Mammary epithelial cell (primary cell): ENCODE measurements at regions of chr1 and their contacts with region 1.

Region 1: DNA sequence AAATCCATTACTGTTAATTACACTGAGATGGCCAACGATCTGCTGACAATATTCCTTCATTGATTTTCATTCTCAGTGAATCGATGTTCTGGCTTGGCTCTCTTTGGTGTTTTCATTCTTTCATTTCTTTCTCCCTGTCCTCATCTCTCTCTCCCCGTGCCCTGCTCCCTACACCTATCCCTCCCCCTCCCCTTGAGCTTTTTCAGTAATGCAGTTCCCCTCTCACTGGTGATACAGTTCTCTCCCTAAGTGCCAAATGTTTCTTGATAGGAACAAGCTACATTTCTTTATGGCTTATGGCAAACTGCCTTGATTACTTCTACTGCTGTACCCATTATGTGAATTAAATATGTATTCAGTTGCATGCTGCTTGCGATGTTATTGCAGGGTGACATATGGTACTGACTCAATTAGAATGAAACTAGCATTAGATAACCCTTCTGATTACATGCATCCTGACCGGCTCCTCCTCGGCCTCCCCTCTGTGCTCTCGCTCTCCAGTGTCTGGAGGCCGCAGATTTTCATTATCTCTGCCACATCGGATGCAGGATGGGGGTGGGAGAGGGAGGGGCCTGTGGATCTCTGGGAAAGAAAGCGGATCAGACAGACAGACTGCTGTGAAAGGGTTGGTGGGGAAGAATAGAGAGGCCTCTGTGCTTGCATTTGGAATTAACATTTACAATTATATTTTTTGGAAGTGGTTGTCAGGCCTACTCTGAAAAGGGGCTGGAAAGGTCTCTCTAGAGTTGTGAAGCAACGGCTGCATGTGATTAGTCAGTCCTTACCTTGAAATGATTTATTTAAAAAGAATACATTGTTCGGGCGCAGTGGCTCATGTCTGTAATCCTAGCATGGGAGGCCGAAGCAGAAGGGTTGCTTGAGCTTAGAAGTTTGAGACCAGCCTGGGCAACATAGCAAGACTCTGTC is 131.0 kb downstream of the PBX1 start:
- DNase-seq: no peak
- H3K4me3 ChIP-seq: no peak overlapping the region
- H3K27ac ChIP-seq: no peak overlapping the region
- H3K4me1 ChIP-seq: no peaks in the 10 kb centered on the region
- H3K27me3 ChIP-seq: no peaks in the 10 kb centered on the region
- CTCF ChIP-seq: no peak

Region 2: GRCh38 chr1:164452549-164452948 is 237.4 kb before region 1 on chr1:
- CTCF ChIA-PET with region 1: no interaction called
- dilution Hi-C with region 1: no loop called
- in situ Hi-C with region 1: no loop called
- intact Hi-C with region 1: no loop called
- DNase-seq: no peak
- H3K4me3 ChIP-seq: no peak overlapping the region
- H3K27ac ChIP-seq: no peak overlapping the region
- H3K4me1 ChIP-seq: no peaks in the 10 kb centered on the region
- H3K27me3 ChIP-seq: no peaks in the 10 kb centered on the region
- CTCF ChIP-seq: no peak

Region 3: GRCh38 chr1:164575356-164575886 is 114.5 kb before region 1 on chr1:
- CTCF ChIA-PET with region 1: no interaction called
- dilution Hi-C with region 1: no loop called
- in situ Hi-C with region 1: no loop called
- intact Hi-C with region 1: no loop called
- DNase-seq: no peak
- H3K4me3 ChIP-seq: no peak overlapping the region
- H3K27ac ChIP-seq: no peak overlapping the region
- H3K4me1 ChIP-seq: peaks cover 7% of the 10 kb centered on the region
- H3K27me3 ChIP-seq: no peaks in the 10 kb centered on the region
- CTCF ChIP-seq: no peak

Region 4: GRCh38 chr1:164659621-164660411 is 30.1 kb before region 1 on chr1:
- CTCF ChIA-PET with region 1: no interaction called
- dilution Hi-C with region 1: loop called (anchors 5 kb)
- in situ Hi-C with region 1: no loop called
- intact Hi-C with region 1: no loop called
- DNase-seq: peak; percentile 56
- H3K4me3 ChIP-seq: no peak overlapping the region
- H3K27ac ChIP-seq: no peak overlapping the region
- H3K4me1 ChIP-seq: peaks cover 17% of the 10 kb centered on the region
- H3K27me3 ChIP-seq: no peaks in the 10 kb centered on the region
- CTCF ChIP-seq: no peak

Region 5: DNA sequence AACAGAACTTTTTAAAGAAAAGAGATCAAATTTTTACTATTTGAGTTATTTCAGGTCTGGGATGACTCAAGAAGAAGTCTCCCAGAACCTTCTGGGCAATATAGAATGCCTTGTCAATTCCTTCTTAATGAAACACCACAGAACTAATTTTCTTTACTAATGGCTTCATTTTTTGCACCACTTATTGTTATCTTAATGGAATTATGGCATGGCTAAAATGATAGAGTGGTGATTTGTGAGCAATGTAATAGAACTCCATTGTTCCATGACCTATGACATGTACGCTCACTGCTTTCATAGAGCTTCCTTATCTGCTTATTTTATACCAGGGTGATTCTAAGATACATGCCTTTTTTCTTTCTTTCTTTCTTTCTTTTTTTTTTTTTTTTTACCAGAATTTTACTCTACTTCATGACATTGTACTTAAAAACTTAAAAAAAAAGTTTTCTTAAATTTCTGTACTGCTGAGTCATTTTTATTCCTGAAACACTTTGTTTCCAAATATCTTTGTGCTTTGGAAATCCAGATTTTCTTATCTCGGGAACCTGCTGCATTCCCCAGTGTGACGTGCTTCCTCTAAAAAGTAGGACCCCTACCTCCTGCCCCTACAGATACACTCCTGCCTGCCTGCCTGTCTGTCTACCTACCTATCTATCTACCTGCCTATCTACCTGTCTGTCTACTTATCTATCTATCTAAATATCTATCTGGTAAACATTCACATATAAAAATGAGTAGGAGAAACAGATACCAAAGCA is 154.0 kb after region 1 on chr1:
- CTCF ChIA-PET with region 1: no interaction called
- dilution Hi-C with region 1: no loop called
- in situ Hi-C with region 1: no loop called
- intact Hi-C with region 1: no loop called
- DNase-seq: no peak
- H3K4me3 ChIP-seq: no peak overlapping the region
- H3K27ac ChIP-seq: no peak overlapping the region
- H3K4me1 ChIP-seq: no peaks in the 10 kb centered on the region
- H3K27me3 ChIP-seq: no peaks in the 10 kb centered on the region
- CTCF ChIP-seq: no peak